Body of pancreas (tissue), 4 donors: ENCODE measurements at regions of chr7 and their contacts with region 1.

Region 1: DNA sequence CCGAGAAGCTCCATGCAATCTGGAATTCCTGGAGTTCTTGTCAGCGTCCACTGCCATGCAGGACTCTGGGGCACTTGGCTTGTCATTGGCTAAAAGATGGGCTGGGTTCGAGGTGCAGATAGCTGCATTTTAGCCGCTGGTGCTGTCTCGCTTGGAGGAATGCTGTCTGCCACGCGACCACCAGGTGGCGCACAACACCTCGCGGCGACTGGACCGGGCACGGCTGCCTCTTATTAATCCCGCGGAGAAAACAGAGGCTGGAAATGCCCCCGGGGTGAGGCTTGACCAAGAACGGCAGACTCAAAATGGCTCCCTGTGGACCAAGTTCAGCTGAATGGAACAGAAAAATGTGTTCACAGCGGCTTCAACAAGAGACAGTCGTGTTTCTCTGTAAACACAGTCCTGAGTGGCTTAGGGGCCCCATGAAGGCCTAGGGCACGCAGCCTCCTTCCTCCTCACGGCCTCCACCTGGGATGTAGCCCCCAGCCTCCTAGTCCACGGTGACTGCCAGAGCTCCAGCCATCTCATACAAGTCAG is 46.2 kb downstream of the AOC1 start:
- DNase-seq: peak; percentile 76 to 81 (median 76)
- ATAC-seq: peak; percentile 63
- H3K4me3 ChIP-seq: no peak overlapping the region
- H3K27ac ChIP-seq: no peak overlapping the region
- H3K4me1 ChIP-seq: peaks cover 28% of the 10 kb centered on the region
- H3K27me3 ChIP-seq: no peaks in the 10 kb centered on the region
- CTCF ChIP-seq: peak; percentile 84 to 97 (median 91)
- POLR2A ChIP-seq: no peak

Region 2: GRCh38 chr7:150941981-150942590 is 43.5 kb after region 1 on chr7:
- intact Hi-C with region 1: no loop called
- DNase-seq: peak in 2 of 4 donors; percentile 10 to 18
- ATAC-seq: no peak
- H3K4me3 ChIP-seq: no peak overlapping the region
- H3K27ac ChIP-seq: no peak overlapping the region
- H3K4me1 ChIP-seq: no peaks in the 10 kb centered on the region
- H3K27me3 ChIP-seq: no peaks in the 10 kb centered on the region
- CTCF ChIP-seq: no peak
- POLR2A ChIP-seq: no peak

Region 3: DNA sequence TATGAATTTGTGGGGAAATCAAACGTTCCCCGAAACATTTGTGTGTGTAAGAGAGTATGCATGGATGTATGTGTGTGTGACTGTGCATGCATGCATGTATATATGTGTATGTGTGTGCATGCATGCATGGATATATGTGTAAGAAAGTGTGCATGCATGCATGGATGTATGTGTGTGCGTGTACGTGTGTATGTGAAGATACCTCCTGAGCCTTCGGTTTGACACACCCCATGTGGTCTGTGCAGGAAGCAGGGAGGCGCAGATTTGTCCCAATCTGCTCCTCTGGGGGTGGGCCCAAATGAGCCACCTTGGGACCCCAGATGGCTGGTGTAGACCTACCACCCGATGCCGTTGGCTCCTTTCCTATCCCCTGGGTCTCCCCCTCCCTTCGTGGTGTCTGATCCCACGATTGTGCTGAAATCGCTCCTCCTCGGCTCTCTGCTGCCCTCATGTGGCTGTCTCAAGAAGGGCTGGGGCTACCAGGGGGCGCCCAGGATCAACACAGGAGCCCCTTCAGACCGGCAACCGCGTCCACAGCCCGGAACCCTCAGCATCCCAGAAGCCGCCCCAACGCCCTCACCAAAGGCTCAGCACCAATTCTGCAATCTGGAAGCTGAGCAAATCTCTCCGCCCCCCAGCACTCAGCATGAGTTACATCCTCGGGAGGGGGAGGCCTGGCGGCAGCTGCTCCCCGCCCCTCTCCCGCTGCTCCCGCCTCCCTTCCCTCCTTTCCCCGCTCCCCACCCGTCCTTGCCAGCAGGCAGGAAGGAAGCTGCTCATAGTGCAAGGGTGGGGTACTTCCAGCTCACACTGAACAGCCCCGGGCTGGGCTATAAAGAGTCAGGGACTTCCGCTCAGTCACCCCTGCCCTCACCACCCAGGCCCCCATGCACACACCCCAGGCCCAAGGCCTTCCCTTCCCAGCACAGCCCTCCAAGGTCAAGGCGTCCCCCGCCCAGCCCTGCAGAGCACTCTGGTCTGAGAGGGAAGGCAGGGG is 90.0 kb after region 1 on chr7:
- intact Hi-C with region 1: loop called (anchors 5 kb)
- DNase-seq: peak in 2 of 4 donors; percentile 48 to 49
- ATAC-seq: peak; percentile 47
- H3K4me3 ChIP-seq: no peak overlapping the region
- H3K27ac ChIP-seq: peak overlapping the region in 1 of 4 donors; percentile 29
- H3K4me1 ChIP-seq: no peaks in the 10 kb centered on the region
- H3K27me3 ChIP-seq: no peaks in the 10 kb centered on the region
- CTCF ChIP-seq: peak; percentile 58 to 76 (median 68)
- POLR2A ChIP-seq: no peak

Region 4: GRCh38 chr7:151028131-151028947 is 129.8 kb after region 1 on chr7 and contains the start of gene ABCB8:
- intact Hi-C with region 1: no loop called
- DNase-seq: peak; percentile 99 to 100 (median 99)
- ATAC-seq: peak; percentile 96
- H3K4me3 ChIP-seq: peak within 1 kb of the TSS in 1 of 2 donors; percentile 68
- H3K27ac ChIP-seq: peak within 1 kb of the TSS; percentile 66 to 89 (median 78)
- H3K4me1 ChIP-seq: peaks cover 5% of the 10 kb centered on the region
- H3K27me3 ChIP-seq: no peaks in the 10 kb centered on the region
- CTCF ChIP-seq: peak; percentile 24 to 84 (median 76)
- POLR2A ChIP-seq: peak in 2 of 3 donors; percentile 70 to 71
- total RNA-seq, gene ABCB8: 8.8 to 39.6 TPM

Region 5: GRCh38 chr7:151110941-151111645 is 212.6 kb after region 1 on chr7:
- intact Hi-C with region 1: loop called (anchors 10 kb)
- DNase-seq: peak; percentile 83 to 89 (median 84)
- ATAC-seq: peak; percentile 77
- H3K4me3 ChIP-seq: no peak overlapping the region
- H3K27ac ChIP-seq: peak overlapping the region; percentile 15 to 80 (median 61)
- H3K4me1 ChIP-seq: peaks cover 46% of the 10 kb centered on the region
- H3K27me3 ChIP-seq: no peaks in the 10 kb centered on the region
- CTCF ChIP-seq: peak; percentile 86 to 94 (median 90)
- POLR2A ChIP-seq: no peak